BJ (cell line): ENCODE measurements at regions of chr6 and their contacts with region 1.

Region 1: GRCh38 chr6:134698228-134698627 is 251.7 kb downstream of the ALDH8A1 start:
- DNase-seq: no peak
- H3K4me3 ChIP-seq: no peak overlapping the region
- H3K27me3 ChIP-seq: no peaks in the 10 kb centered on the region
- CTCF ChIP-seq: no peak

Region 2: DNA sequence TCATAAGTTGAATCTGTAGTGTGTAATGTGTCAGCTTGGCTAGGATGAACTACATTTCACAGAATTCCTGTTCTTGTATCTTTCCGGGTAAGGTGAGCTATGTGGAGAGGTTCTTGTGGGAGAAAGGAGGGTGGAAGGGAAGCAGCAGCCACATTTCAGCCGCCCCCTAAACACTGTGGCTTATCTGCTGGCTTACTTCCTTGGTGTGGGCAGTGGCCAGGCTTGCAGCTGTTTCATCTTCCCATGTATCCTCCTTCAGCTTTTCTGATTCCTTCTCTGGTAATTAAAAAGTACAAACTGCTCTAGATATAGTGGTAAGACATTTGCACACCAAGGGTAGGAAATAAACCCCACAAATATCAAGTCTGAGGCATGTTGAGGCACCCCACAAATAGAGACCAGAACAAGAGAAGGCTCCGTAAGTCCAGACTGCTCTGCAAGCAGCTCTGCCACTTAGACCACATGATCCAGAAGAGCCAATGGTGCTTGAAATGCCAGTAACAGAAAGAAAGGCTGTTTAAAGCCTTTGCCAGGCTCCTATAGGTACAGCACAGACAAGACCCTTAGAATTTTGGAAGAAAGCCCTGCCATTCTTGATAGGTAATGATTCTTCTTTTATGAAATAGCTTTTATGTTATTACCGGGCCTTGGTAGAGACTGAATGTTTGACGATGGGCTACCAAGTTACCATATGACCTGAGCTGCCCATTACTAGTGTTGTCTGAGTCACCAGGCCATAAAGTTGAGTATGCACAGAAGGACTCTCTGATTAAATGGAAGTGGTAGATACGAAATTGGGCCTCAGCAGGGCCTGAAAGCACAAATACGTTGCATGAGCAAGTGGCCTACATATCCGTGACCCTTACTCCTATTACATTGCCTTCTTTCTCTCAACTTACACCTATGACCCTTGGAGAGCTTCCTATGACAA is 165.3 kb before region 1 on chr6:
- CTCF ChIA-PET with region 1: no interaction called
- POLR2A ChIA-PET with region 1: interaction called, 19 read pairs
- DNase-seq: no peak
- H3K4me3 ChIP-seq: no peak overlapping the region
- H3K27me3 ChIP-seq: no peaks in the 10 kb centered on the region
- CTCF ChIP-seq: no peak